ENCODE measurements at regions of chr1 and their contacts with region 1.

Region 1: GRCh38 chr1:151839457-151840405 is at the start of gene C2CD4D:
- DNase-seq: peak; percentile 73
- H3K4me3 Mint-ChIP-seq: peak within 1 kb of the TSS; percentile 90
- H3K27ac Mint-ChIP-seq: peak within 1 kb of the TSS; percentile 78
- H3K4me1 Mint-ChIP-seq: peaks cover 55% of the 10 kb centered on the region
- H3K27me3 Mint-ChIP-seq: peaks cover 6% of the 10 kb centered on the region
- total RNA-seq, gene C2CD4D: 1.0 and 1.2 TPM in 2 replicates

Region 2: DNA sequence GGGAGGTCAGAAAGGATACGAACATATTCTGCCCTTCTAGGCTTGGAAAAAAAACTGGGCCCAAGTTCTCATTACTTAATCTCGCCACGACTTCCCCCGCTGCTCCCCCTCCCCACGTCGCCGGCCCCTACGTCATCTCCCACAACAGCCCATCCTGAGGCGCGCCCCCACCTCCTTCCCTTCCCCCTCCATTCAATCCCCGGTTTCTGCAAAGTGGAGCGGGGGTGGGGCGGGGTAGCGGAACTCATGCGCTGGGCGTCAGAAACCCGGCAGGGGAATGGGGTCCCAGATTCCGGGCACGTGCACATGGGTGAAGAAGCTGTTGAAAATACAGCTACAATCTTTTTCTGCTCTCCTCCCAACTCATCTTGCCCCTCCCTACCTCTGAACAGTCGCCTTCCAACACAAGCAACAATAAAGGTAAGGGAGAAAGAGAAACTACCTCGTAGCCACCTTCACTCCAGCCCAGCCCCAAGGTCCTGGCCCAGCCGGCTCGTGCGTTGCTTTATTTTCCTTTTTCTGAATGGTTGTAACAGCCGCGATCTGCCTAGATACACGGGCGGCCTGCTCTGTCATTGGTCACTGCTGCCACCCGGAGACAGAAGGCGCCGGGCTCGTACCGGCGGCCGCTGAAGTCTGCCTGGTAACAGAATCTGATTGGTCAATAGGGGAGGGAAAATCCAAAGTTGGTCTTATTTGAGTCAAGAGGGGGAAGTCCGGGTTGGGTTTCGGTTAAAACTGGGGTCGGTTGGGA is 492.8 kb before region 1 on chr1 and contains the start of gene RFX5:
- intact Hi-C with region 1: loop called (anchors 5 kb)
- DNase-seq: peak; percentile 95
- H3K4me3 Mint-ChIP-seq: peak within 1 kb of the TSS; percentile 95
- H3K27ac Mint-ChIP-seq: peak within 1 kb of the TSS; percentile 99
- H3K4me1 Mint-ChIP-seq: peaks cover 45% of the 10 kb centered on the region
- H3K27me3 Mint-ChIP-seq: no peaks in the 10 kb centered on the region
- total RNA-seq, gene RFX5: 78.1 and 83.4 TPM in 2 replicates

Region 3: DNA sequence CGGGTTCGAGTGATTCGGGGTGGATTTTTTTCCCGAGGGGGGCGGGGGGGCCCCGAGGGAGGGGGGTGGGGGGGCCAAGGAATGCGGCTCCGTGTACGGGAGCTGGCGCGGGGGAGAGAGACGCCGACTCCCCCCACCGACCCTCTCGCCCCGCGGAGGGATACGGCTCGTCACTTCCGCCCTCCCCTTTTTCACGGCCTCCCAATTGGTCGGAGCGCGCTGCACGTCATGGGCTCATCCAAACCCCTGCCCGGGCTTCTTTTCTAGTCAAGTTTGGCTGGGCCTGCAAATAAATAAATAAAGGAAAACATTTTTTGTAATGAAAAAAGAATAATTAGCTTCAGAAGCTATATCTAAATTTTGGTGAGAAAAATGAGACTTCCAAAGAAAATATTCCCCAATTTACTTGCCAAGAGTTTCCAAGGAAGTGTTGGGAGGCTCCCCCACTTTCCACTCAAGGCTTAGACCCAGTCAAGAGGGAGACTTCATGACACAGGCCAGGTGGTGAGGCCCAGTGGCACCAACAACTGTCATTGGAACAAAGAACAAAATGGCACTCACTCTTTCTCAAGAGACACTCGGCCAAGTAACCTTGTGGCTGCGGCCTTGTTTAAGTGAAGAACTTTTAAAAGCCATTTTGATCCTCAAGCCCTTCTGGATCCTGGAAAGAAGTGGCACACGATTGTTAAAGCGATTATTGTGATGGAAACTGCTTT is 380.2 kb before region 1 on chr1 and contains the start of gene POGZ:
- intact Hi-C with region 1: loop called (anchors 5 kb)
- DNase-seq: peak; percentile 88
- H3K4me3 Mint-ChIP-seq: peak within 1 kb of the TSS; percentile 90
- H3K27ac Mint-ChIP-seq: peak within 1 kb of the TSS; percentile 97
- H3K4me1 Mint-ChIP-seq: peaks cover 21% of the 10 kb centered on the region
- H3K27me3 Mint-ChIP-seq: peaks cover 13% of the 10 kb centered on the region
- total RNA-seq, gene POGZ: 89.1 and 91.1 TPM in 2 replicates

Region 4: GRCh38 chr1:151539990-151540981 is 299.4 kb before region 1 on chr1 and contains the start of gene TUFT1:
- intact Hi-C with region 1: loop called (anchors 1 kb)
- DNase-seq: peak; percentile 91
- H3K4me3 Mint-ChIP-seq: peak within 1 kb of the TSS; percentile 91
- H3K27ac Mint-ChIP-seq: peak within 1 kb of the TSS; percentile 62
- H3K4me1 Mint-ChIP-seq: peaks cover 16% of the 10 kb centered on the region
- H3K27me3 Mint-ChIP-seq: peaks cover 10% of the 10 kb centered on the region
- total RNA-seq, gene TUFT1: 1.9 and 2.3 TPM in 2 replicates

Region 5: GRCh38 chr1:151693076-151693651 is 146.6 kb before region 1 on chr1:
- intact Hi-C with region 1: loop called (anchors 1 kb)
- DNase-seq: no peak
- H3K4me3 Mint-ChIP-seq: no peak overlapping the region
- H3K27ac Mint-ChIP-seq: no peak overlapping the region
- H3K4me1 Mint-ChIP-seq: no peaks in the 10 kb centered on the region
- H3K27me3 Mint-ChIP-seq: no peaks in the 10 kb centered on the region

Region 6: GRCh38 chr1:151739590-151740375 is 99.9 kb before region 1 on chr1:
- intact Hi-C with region 1: loop called (anchors 1 kb)
- DNase-seq: no peak
- H3K4me3 Mint-ChIP-seq: no peak overlapping the region
- H3K27ac Mint-ChIP-seq: no peak overlapping the region
- H3K4me1 Mint-ChIP-seq: no peaks in the 10 kb centered on the region
- H3K27me3 Mint-ChIP-seq: peaks cover 8% of the 10 kb centered on the region

Region 7: DNA sequence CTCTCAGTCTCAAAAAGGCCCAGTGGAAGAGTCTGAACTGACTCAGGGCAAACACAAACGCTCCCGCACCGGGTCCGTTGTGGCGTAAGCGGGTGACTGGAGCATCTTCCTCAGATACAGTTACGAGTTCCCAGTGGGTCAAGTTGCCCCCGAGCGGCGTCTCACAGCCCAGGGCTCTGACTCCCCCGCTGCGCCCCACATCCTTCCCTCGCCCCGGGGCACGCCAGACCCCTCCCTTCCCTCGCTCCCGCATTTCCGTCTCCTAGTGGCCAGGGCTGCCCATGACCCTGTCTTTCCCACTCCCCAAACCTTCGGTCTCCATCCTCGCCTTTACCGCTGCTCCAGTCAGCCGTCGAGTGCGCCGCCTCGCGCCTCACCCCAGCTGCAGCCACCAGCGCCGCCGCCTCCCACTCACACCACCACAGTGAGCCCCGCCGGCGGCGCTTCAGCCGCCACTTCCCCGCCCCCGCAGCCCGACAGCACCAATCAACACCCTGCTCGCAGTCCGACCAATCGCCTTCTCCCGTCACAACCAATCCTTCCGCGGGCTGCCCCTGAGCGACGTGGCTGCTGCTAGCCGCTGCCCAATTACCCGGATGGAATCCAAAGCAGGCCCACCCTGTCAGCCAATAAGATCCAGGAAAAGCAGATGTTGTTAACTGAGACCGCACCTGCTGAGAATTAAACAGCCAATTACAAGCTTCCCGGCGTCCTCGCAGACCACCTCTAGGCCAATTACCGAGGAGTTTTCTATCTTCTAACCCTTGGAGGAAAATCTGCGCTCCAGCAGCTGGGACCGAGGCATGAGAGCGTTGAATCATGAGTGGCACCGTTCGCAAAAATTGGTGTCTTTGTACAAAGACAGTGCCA is 49.4 kb before region 1 on chr1 and contains the start of gene TDRKH:
- intact Hi-C with region 1: loop called (anchors 1 kb)
- DNase-seq: peak; percentile 98
- H3K4me3 Mint-ChIP-seq: peak within 1 kb of the TSS; percentile 95
- H3K27ac Mint-ChIP-seq: peak within 1 kb of the TSS; percentile 78
- H3K4me1 Mint-ChIP-seq: peaks cover 33% of the 10 kb centered on the region
- H3K27me3 Mint-ChIP-seq: peaks cover 2% of the 10 kb centered on the region
- total RNA-seq, gene TDRKH: 14.6 and 16.4 TPM in 2 replicates

Region 8: GRCh38 chr1:151867785-151868411 is 28.2 kb after region 1 on chr1:
- intact Hi-C with region 1: no loop called
- DNase-seq: no peak
- H3K4me3 Mint-ChIP-seq: no peak overlapping the region
- H3K27ac Mint-ChIP-seq: no peak overlapping the region
- H3K4me1 Mint-ChIP-seq: peaks cover 5% of the 10 kb centered on the region
- H3K27me3 Mint-ChIP-seq: peaks cover 6% of the 10 kb centered on the region